H1 (cell line): ENCODE measurements at regions of chr4 and their contacts with region 1.

Region 1: DNA sequence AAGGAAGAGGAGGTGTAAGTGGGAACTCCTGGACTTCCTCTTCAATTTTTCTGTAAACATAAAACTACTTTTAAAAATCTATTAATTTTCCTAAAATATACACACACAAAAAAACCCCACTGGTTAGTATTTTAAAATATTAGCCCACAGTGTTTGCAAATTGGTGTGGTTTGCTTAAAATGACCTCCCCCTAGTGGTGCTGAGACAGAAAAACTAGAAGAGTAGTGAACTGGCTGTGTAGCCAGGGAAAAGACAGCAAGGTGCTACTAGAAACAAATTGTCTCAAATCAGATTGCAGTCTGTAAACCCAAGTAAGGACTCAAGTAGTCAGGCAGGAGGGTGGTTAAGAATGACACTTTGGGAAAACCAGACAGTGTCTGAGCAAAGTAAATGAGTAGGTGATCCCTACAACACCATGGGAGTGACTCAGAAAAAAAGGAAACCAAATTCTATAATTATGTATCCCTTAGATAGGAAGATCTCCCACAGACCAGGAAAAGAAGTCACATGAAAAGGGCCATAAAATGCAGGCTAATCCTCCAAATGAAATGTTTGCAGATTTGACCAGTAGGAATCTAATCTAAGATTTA is 26.0 kb downstream of the AMTN start:
- DNase-seq: no peak
- H3K4me3 ChIP-seq: no peak overlapping the region
- H3K27ac ChIP-seq: no peak overlapping the region
- H3K4me1 ChIP-seq: 0 out of 7 replicates have a peak, but pooled peaks cover 0 to 2% (median 0%) of the 10 kb centered on the region in 4 experiments
- H3K27me3 ChIP-seq: no peaks in the 10 kb centered on the region
- CTCF ChIP-seq: peak in 2 of 3 experiments; percentile 39 to 65; a peak in 2 of 4 replicates
- EP300 ChIP-seq: no peak
- POLR2A ChIP-seq: no peak
- RAD21 ChIP-seq: peak; percentile 43 to 49

Region 2: GRCh38 chr4:70531981-70532380 is 12.4 kb before region 1 on chr4:
- CTCF ChIA-PET with region 1: interaction called, 12 read pairs
- POLR2A ChIA-PET with region 1: interaction called, 3 read pairs
- DNase-seq: no peak
- H3K4me3 ChIP-seq: no peak overlapping the region
- H3K27ac ChIP-seq: no peak overlapping the region
- H3K4me1 ChIP-seq: no peaks in the 10 kb centered on the region
- H3K27me3 ChIP-seq: no peaks in the 10 kb centered on the region
- CTCF ChIP-seq: peak in 2 of 3 experiments; percentile 30 to 48; a peak in 3 of 4 replicates
- EP300 ChIP-seq: no peak
- POLR2A ChIP-seq: no peak
- RAD21 ChIP-seq: peak in 1 of 2 experiments; percentile 22; a peak in 1 of 4 replicates

Region 3: GRCh38 chr4:70559211-70559830 is 14.9 kb after region 1 on chr4:
- CTCF ChIA-PET with region 1: interaction called, 10 read pairs
- POLR2A ChIA-PET with region 1: no interaction called
- DNase-seq: peak in 1 of 2 experiments; percentile 53
- H3K4me3 ChIP-seq: no peak overlapping the region
- H3K27ac ChIP-seq: no peak overlapping the region
- H3K4me1 ChIP-seq: no peaks in the 10 kb centered on the region
- H3K27me3 ChIP-seq: no peaks in the 10 kb centered on the region
- CTCF ChIP-seq: peak in 2 of 3 experiments; percentile 71 to 81; a peak in 3 of 4 replicates
- EP300 ChIP-seq: no peak
- POLR2A ChIP-seq: no peak
- RAD21 ChIP-seq: peak; percentile 89 to 90